ENCODE measurements at regions of chr15 and their contacts with region 1.

Region 1: GRCh38 chr15:86316726-86317383 is 237.2 kb downstream of the AGBL1 start:
- DNase-seq: no peak
- H3K4me3 ChIP-seq: no peak overlapping the region
- H3K4me3 Mint-ChIP-seq: no peak overlapping the region
- H3K27ac ChIP-seq: no peak overlapping the region
- H3K27ac Mint-ChIP-seq: no peak overlapping the region
- H3K4me1 ChIP-seq: no peaks in the 10 kb centered on the region
- H3K4me1 Mint-ChIP-seq: no peaks in the 10 kb centered on the region
- H3K27me3 ChIP-seq: no peaks in the 10 kb centered on the region
- H3K27me3 Mint-ChIP-seq: peaks cover 0 to 2% (median 2%) of the 10 kb centered on the region in 3 donors
- CTCF ChIP-seq: no peak

Region 2: DNA sequence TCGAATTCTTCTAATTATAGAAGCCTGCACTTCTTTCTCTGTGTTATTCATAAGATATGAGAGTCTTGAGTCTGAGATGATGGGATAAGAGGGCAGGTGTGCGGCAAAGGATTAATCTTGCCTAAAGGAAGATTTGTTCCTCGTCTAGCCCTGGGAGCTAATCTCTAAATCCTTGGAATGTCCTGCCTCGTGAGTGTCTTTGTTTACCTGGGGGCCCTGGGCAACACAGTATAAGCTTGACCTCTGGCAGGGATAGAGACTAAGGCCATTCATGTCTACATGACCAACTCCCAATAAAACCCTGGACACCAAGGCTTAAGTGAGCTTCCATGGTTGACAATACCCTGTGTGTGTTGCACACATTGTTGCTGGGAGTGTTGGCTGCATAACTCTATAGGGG is 240.4 kb before region 1 on chr15:
- intact Hi-C with region 1: no loop called
- DNase-seq: no peak
- H3K4me3 ChIP-seq: no peak overlapping the region
- H3K4me3 Mint-ChIP-seq: no peak overlapping the region
- H3K27ac ChIP-seq: no peak overlapping the region
- H3K27ac Mint-ChIP-seq: no peak overlapping the region
- H3K4me1 ChIP-seq: no peaks in the 10 kb centered on the region
- H3K4me1 Mint-ChIP-seq: no peaks in the 10 kb centered on the region
- H3K27me3 ChIP-seq: no peaks in the 10 kb centered on the region
- H3K27me3 Mint-ChIP-seq: peaks cover 0 to 3% (median 3%) of the 10 kb centered on the region in 3 donors
- CTCF ChIP-seq: no peak

Region 3: GRCh38 chr15:87154767-87155166 is 837.9 kb after region 1 on chr15:
- intact Hi-C with region 1: loop called in 1 of 2 experiments (anchors 10 kb)
- DNase-seq: no peak
- H3K4me3 ChIP-seq: no peak overlapping the region
- H3K4me3 Mint-ChIP-seq: no peak overlapping the region
- H3K27ac ChIP-seq: no peak overlapping the region
- H3K27ac Mint-ChIP-seq: no peak overlapping the region
- H3K4me1 ChIP-seq: no peaks in the 10 kb centered on the region
- H3K4me1 Mint-ChIP-seq: no peaks in the 10 kb centered on the region
- H3K27me3 ChIP-seq: no peaks in the 10 kb centered on the region
- H3K27me3 Mint-ChIP-seq: peaks cover 0 to 2% (median 0%) of the 10 kb centered on the region in 3 donors
- CTCF ChIP-seq: no peak

Measured in CD14-positive monocyte (primary cell).